Psoas muscle (tissue), 8 donors: ENCODE measurements at regions of chr15 and their contacts with region 1.

Region 1: GRCh38 chr15:58331903-58332675 is 99.7 kb upstream of the LIPC start:
- DNase-seq: peak; percentile 94 to 98
- ATAC-seq: peak; percentile 90 to 97 (median 94)
- H3K4me3 ChIP-seq: peak overlapping the region; percentile 2
- H3K27ac ChIP-seq: peak overlapping the region; percentile 95
- H3K4me1 ChIP-seq: peaks cover 36% of the 10 kb centered on the region
- H3K27me3 ChIP-seq: no peaks in the 10 kb centered on the region
- CTCF ChIP-seq: no peak

Region 2: DNA sequence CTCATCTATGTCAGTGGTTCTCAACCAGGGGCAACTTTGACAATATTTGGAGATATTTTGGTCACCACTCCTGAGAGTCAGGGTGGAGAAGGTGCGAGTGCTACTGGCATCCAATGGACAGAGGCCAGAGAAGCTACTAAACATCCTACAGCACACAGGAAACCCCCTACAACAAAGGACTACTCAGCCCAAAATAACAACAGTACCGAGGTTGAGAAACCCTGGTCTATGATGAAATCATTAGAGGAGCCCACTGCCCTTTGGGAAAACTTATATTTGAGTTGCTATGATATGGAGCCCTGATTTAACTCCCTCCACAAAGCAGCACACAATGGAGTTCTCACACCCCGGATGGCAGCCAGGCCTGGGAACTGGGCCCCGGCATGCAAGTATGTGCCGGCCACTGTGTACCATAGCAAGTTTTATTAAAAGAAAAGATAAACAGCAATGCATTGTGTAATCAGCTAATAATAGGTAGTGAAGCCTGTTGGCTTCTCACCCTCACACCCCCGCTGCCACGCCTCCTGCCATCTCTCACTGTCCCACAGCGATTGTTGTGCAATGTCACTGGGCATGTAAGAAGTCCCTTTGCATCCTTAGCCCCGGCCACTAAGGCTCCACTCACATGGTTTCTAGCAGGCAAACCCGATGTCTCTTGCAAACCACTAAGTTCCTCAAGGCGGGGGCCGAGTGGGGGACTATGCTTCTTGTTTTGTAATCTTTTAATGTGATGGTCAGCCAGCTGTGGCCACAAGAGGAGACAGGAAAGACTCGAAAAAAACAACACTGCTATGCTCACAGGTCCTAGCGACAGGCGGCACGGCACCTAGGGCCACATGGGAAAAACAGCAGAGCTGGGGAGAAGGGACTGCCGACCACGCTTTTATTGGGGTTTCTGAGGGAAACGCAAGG is 84.0 kb before region 1 on chr15:
- intact Hi-C with region 1: loop called in 1 of 2 experiments (anchors 5 kb)
- DNase-seq: peak; percentile 81 to 93
- ATAC-seq: peak; percentile 93 to 96 (median 95)
- H3K4me3 ChIP-seq: no peak overlapping the region
- H3K27ac ChIP-seq: peak overlapping the region; percentile 81
- H3K4me1 ChIP-seq: peaks cover 26% of the 10 kb centered on the region
- H3K27me3 ChIP-seq: no peaks in the 10 kb centered on the region
- CTCF ChIP-seq: no peak

Region 3: DNA sequence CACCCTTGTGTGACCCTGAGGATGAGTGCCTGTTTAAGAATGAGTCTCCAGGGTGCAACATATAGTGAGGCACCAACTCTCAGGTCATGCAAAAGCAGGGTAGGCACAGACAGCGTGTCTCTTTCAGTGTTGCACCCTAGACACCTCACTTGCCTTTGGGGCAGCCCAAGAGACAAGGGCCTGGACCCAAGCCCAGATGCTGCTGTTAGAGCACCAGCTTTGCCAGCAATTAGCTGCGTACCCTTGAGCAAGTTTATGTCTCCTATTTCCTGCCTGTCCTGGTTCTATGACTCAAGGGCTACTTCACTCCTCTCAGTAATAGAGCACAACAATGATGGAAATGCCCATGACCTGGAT is 71.2 kb before region 1 on chr15:
- intact Hi-C with region 1: loop called in 1 of 2 experiments (anchors 5 kb)
- DNase-seq: peak; percentile 61 to 89
- ATAC-seq: peak; percentile 88 to 92 (median 88)
- H3K4me3 ChIP-seq: no peak overlapping the region
- H3K27ac ChIP-seq: peak overlapping the region; percentile 92
- H3K4me1 ChIP-seq: peaks cover 25% of the 10 kb centered on the region
- H3K27me3 ChIP-seq: no peaks in the 10 kb centered on the region
- CTCF ChIP-seq: no peak

Region 4: DNA sequence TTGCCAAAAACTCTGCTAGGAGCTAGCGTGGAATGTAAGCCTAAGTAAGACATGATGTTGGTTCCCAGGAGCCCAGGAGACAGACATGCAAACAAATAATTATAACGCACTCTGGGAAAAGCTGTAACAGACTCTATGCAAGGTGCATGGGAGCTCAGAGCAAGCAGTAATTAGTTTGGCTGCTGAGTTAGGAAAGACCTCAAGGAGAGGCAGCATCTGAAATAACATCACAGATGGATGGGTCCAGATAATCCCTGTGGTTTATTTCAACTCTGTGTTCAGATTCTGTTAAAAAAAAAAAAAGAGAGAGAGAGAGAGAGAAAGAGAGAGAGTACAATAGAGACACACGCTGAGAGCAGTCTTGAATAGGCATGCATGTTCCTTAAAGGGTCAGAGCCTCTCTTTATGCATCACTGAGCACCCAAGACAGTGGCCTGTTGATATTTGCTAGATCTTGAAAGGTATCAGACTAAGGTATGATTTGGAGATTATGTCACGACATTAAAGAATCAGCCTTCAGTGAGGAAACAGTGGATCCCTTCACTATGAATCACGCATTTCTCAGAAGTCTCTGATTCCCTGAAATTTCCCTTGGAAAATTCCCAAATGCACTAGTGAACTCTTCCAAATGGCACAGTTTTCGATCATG is 24.7 kb before region 1 on chr15:
- intact Hi-C with region 1: no loop called
- DNase-seq: no peak
- ATAC-seq: no peak
- H3K4me3 ChIP-seq: no peak overlapping the region
- H3K27ac ChIP-seq: no peak overlapping the region
- H3K4me1 ChIP-seq: peaks cover 4% of the 10 kb centered on the region
- H3K27me3 ChIP-seq: no peaks in the 10 kb centered on the region
- CTCF ChIP-seq: no peak

Region 5: DNA sequence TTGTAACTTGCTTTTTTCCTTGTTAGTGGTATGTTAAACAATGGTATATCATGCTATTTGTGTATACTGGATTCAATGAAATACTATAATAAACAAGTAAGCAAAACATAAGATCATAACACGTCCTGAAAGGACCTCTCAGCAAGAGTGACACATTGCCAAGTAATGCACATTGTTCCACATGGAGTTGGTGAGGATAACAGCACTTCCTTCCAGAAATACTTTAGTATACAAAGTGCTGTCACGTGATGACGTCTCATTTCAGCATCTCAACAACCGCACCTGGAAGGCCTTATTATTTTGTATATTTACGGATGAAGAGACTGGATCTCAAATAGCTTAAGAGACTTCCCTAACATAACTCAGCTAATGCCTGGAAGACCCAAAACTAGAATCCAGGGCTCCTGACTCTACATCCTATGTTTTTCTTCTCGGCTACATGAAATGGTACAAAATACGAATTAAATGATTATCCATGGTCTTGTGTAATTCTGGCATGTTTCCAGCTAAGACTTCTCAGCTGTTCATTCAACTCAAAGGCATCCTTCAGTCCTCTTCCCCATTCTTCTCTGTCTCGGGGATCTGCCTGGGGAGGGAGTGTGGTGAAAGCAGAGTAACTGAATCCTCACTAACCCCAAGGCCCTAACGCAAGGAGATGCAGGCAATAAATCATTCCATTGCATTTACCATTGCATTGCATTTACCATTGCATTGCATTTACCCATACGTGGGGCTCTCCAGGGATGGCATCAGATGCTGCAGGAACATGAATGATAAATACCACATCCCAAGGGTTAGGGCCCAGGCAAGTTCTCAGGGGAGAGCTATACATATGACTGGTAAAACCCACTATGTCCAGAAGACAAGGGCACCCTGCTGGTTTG is 178.9 kb after region 1 on chr15:
- intact Hi-C with region 1: loop called in 1 of 2 experiments (anchors 1 kb)
- DNase-seq: no peak
- ATAC-seq: no peak
- H3K4me3 ChIP-seq: no peak overlapping the region
- H3K27ac ChIP-seq: no peak overlapping the region
- H3K4me1 ChIP-seq: peaks cover 10% of the 10 kb centered on the region
- H3K27me3 ChIP-seq: no peaks in the 10 kb centered on the region
- CTCF ChIP-seq: no peak

Region 6: GRCh38 chr15:58546635-58547627 is 214.8 kb after region 1 on chr15:
- intact Hi-C with region 1: loop called (anchors 2 to 5 kb)
- DNase-seq: peak; percentile 59 to 80
- ATAC-seq: peak; percentile 91 to 95 (median 92)
- H3K4me3 ChIP-seq: no peak overlapping the region
- H3K27ac ChIP-seq: peak overlapping the region; percentile 56
- H3K4me1 ChIP-seq: peaks cover 35% of the 10 kb centered on the region
- H3K27me3 ChIP-seq: peaks cover 0 to 1% (median 0%) of the 10 kb centered on the region in 3 donors
- CTCF ChIP-seq: no peak

Region 7: GRCh38 chr15:58749532-58750337 is 417.6 kb after region 1 on chr15 and contains the start of gene ADAM10:
- intact Hi-C with region 1: loop called (anchors 5 to 10 kb)
- DNase-seq: peak; percentile 99 to 100
- ATAC-seq: peak; percentile 97 to 99 (median 98)
- H3K4me3 ChIP-seq: peak within 1 kb of the TSS; percentile 97
- H3K27ac ChIP-seq: peak within 1 kb of the TSS; percentile 98
- H3K4me1 ChIP-seq: peaks cover 23% of the 10 kb centered on the region
- H3K27me3 ChIP-seq: no peaks in the 10 kb centered on the region
- CTCF ChIP-seq: no peak
- total RNA-seq, gene ADAM10: 33.1 to 37.9 (median 36.5) TPM